ENCODE measurements at regions of chr9 and their contacts with region 1.

Region 1: GRCh38 chr9:133184962-133185361 is 21.2 kb upstream of the GBGT1 start:
- DNase-seq: peak; percentile 49
- CTCF ChIP-seq: peak; percentile 21

Region 2: GRCh38 chr9:133478851-133479711 is 294.1 kb after region 1 on chr9 and contains the start of gene SLC2A6:
- in situ Hi-C with region 1: loop called (anchors 25 kb)
- DNase-seq: peak; percentile 98
- CTCF ChIP-seq: no peak

Measured in GM13976 (cell line).